Activated CD8-positive, alpha-beta memory T cell treated with anti-CD3 and anti-CD28 coated beads, Interleukin-2, amount 10 ng/mL, durations not matched to agents 7 days and 5 days (primary cell): ENCODE measurements at regions of chr1 and their contacts with region 1.

Region 1: DNA sequence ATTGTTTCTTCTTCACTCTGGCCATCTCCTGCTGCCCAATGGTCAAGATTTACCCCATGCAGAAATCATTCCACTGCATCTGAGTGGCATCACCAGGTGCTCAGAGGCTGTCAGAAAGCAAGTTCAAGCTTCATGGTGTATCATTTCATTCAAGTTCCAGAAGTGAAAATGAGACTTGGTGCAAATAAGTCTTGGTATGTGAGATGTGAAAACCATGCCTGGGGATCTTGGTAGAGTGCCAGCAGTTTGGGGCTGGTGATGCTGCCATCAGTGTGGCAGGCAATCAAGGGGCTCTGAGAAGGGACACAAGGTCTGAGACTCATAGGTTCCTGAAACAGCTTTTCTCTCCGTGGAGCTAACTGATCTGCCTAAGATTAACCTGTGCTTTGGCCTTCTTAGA is 52.0 kb downstream of the CD2 start:
- DNase-seq: peak; percentile 81
- ATAC-seq: peak; percentile 34
- H3K4me3 Mint-ChIP-seq: peak overlapping the region; percentile 80
- H3K27ac Mint-ChIP-seq: peak overlapping the region; percentile 97
- H3K4me1 Mint-ChIP-seq: peaks cover 85% of the 10 kb centered on the region
- H3K27me3 Mint-ChIP-seq: no peaks in the 10 kb centered on the region

Region 2: GRCh38 chr1:116754198-116754977 is 51.9 kb before region 1 on chr1 and contains the start of gene CD2:
- CTCF ChIA-PET with region 1: interaction called, 39 read pairs
- DNase-seq: peak; percentile 82
- ATAC-seq: peak; percentile 79
- H3K4me3 Mint-ChIP-seq: peak within 1 kb of the TSS; percentile 97
- H3K27ac Mint-ChIP-seq: peak within 1 kb of the TSS; percentile 98
- H3K4me1 Mint-ChIP-seq: peaks cover 37% of the 10 kb centered on the region
- H3K27me3 Mint-ChIP-seq: no peaks in the 10 kb centered on the region
- total RNA-seq, gene CD2: 278 to 444 TPM

Region 3: GRCh38 chr1:116763787-116764465 is 42.3 kb before region 1 on chr1:
- CTCF ChIA-PET with region 1: interaction called, 224 read pairs
- DNase-seq: peak; percentile 83
- ATAC-seq: peak; percentile 20
- H3K4me3 Mint-ChIP-seq: peak overlapping the region; percentile 65
- H3K27ac Mint-ChIP-seq: peak overlapping the region; percentile 97
- H3K4me1 Mint-ChIP-seq: peaks cover 96% of the 10 kb centered on the region
- H3K27me3 Mint-ChIP-seq: no peaks in the 10 kb centered on the region

Region 4: GRCh38 chr1:117171900-117172511 is 365.8 kb after region 1 on chr1:
- CTCF ChIA-PET with region 1: no interaction called
- DNase-seq: no peak
- ATAC-seq: no peak
- H3K4me3 Mint-ChIP-seq: no peak overlapping the region
- H3K27ac Mint-ChIP-seq: no peak overlapping the region
- H3K4me1 Mint-ChIP-seq: no peaks in the 10 kb centered on the region
- H3K27me3 Mint-ChIP-seq: peaks cover 12% of the 10 kb centered on the region